Transverse colon (tissue), 4 donors: ENCODE measurements at regions of chr20 and their contacts with region 1.

Region 1: DNA sequence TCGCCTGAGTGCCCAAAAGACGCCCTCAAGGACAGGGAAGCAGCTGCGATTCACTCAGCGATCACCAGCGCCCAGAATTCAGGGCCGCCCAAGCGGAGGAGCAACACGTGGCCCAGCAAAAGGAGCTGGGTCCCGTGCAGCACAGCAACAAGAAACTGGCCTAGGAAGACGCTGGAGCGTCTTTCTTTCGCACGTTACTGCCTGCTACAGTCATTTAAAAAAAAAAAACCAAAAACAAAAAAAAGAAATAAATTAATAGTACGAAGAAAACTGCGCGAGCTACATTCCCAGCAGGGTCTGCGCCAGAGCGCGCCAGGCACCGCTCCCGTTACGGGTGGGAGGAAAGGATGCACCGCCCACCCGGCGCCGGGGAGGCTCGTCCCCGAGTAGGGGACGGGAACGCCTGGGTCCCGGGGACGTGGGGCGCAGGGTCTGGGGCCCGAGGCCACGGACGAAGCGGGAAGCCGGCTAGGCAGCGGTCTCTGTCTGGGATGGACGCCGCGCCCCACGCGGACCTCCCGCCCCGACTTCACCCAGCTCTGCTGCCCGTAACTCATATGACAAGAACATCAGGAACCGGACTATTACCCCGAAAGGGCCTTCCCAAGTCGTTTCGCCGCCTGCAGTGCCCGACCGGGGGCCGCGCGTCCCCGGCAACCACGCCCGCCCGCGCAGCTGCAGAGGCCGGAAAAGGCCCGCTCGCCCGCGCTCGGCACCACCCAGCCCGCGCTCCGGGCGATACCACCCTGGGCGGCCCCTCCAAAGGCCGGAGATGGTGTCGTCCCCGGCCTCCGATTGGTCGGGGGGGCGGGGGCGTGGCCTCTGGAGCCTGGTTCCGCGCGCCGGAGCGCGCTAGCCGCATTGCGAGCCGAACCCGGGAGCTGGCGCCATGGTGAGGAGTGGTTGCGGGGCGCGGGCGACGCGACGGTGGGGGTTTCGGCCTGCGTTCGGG is at the start of gene NOP56:
- DNase-seq: peak; percentile 95
- H3K4me3 ChIP-seq: peak within 1 kb of the TSS; percentile 71 to 99 (median 86)
- H3K27ac ChIP-seq: peak within 1 kb of the TSS; percentile 94 to 99 (median 96)
- H3K4me1 ChIP-seq: peaks cover 9 to 27% (median 19%) of the 10 kb centered on the region in 4 donors
- H3K27me3 ChIP-seq: no peaks in the 10 kb centered on the region
- CTCF ChIP-seq: no peak
- EP300 ChIP-seq: no peak
- POLR2A ChIP-seq: peak; percentile 77
- total RNA-seq, gene NOP56: 32.8 to 303 (median 126) TPM

Region 2: DNA sequence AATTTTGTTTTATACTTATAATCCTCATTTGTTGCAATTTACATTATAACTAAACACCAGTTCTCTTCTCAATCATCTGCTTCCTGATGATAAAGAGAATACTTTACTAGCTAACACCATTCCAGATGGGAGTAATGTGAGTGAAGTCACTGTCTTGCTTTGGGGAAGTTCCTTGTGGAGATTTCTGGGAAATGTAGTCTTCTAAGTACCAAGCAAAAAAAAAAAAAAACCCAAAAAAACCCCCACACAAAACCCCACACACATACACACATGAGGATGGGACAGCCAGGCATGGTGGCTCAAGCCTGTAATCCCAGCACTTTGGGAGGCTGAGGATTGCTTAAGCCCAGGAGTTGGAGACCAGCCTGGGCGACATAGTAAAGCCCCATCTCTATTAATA is 1388.2 kb before region 1 on chr20:
- in situ Hi-C with region 1: no loop called
- intact Hi-C with region 1: no loop called
- DNase-seq: no peak
- H3K4me3 ChIP-seq: no peak overlapping the region
- H3K27ac ChIP-seq: no peak overlapping the region
- H3K4me1 ChIP-seq: peaks cover 0 to 16% (median 14%) of the 10 kb centered on the region in 4 donors
- H3K27me3 ChIP-seq: no peaks in the 10 kb centered on the region
- CTCF ChIP-seq: no peak
- EP300 ChIP-seq: no peak
- POLR2A ChIP-seq: no peak

Region 3: GRCh38 chr20:2523919-2524708 is 127.9 kb before region 1 on chr20:
- in situ Hi-C with region 1: loop called (anchors 10 kb)
- intact Hi-C with region 1: no loop called
- DNase-seq: peak; percentile 91
- H3K4me3 ChIP-seq: peak overlapping the region; percentile 51 to 82 (median 78)
- H3K27ac ChIP-seq: peak overlapping the region; percentile 77 to 93 (median 90)
- H3K4me1 ChIP-seq: peaks cover 0 to 5% (median 2%) of the 10 kb centered on the region in 4 donors
- H3K27me3 ChIP-seq: no peaks in the 10 kb centered on the region
- CTCF ChIP-seq: peak; percentile 96 to 98 (median 96)
- EP300 ChIP-seq: no peak
- POLR2A ChIP-seq: peak; percentile 57

Region 4: GRCh38 chr20:2692036-2692885 is 40.2 kb after region 1 on chr20 and contains the start of gene EBF4:
- in situ Hi-C with region 1: no loop called
- intact Hi-C with region 1: loop called (anchors 5 kb)
- DNase-seq: peak; percentile 47
- H3K4me3 ChIP-seq: peak within 1 kb of the TSS; percentile 41 to 58 (median 50)
- H3K27ac ChIP-seq: peak within 1 kb of the TSS; percentile 78 to 86 (median 82)
- H3K4me1 ChIP-seq: peaks cover 5 to 21% (median 14%) of the 10 kb centered on the region in 4 donors
- H3K27me3 ChIP-seq: peaks cover 88% of the 10 kb centered on the region
- CTCF ChIP-seq: no peak
- EP300 ChIP-seq: no peak
- POLR2A ChIP-seq: no peak
- total RNA-seq, gene EBF4: 3.7 to 101 (median 5.4) TPM

Region 5: DNA sequence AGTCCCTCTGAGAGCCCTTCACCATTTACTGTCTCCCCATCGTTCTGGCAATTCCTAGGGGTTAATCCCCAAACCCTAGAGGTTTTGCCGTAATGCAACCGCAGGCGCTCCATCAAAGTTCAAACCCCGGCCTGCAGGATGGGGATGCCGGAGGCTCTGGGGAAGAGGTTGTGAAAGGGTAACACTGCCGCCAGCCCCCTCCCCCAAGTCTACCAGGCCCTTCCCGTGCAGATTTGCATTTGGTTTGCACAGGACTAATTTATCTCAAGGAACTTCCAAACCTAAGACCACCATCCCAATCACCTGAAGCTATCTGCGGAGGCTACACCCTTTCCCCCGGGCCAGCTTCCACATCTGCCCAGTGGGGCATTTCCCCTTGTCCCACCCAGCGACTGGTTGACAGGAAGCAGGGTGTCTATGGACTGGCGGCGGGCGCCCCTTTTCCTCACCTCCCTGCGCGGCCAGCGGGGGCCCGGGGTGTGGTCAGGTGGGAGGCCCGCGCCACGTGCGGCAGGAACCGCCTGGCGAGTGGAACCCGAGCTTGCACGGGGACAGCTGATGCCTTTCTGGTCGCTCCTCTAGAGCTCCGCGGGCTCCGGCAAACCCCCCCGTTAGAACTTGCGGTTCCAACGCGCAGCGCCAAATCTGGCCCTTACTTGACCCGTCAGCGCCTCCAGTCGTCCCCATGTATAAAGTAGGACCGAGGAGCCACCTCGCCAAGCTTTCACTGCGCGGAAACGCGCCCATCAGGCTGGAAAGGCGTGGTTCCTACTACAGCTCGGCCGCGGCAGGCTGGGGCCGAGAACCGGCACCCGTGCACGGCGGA is 596.3 kb after region 1 on chr20:
- in situ Hi-C with region 1: no loop called
- intact Hi-C with region 1: no loop called
- DNase-seq: no peak
- H3K4me3 ChIP-seq: peak overlapping the region in 1 of 4 donors; percentile 6
- H3K27ac ChIP-seq: no peak overlapping the region
- H3K4me1 ChIP-seq: peaks cover 3 to 11% (median 8%) of the 10 kb centered on the region in 4 donors
- H3K27me3 ChIP-seq: peaks cover 58% of the 10 kb centered on the region
- CTCF ChIP-seq: no peak
- EP300 ChIP-seq: no peak
- POLR2A ChIP-seq: no peak